MCF 10A (cell line): ENCODE measurements at regions of chr17 and their contacts with region 1.

Region 1: DNA sequence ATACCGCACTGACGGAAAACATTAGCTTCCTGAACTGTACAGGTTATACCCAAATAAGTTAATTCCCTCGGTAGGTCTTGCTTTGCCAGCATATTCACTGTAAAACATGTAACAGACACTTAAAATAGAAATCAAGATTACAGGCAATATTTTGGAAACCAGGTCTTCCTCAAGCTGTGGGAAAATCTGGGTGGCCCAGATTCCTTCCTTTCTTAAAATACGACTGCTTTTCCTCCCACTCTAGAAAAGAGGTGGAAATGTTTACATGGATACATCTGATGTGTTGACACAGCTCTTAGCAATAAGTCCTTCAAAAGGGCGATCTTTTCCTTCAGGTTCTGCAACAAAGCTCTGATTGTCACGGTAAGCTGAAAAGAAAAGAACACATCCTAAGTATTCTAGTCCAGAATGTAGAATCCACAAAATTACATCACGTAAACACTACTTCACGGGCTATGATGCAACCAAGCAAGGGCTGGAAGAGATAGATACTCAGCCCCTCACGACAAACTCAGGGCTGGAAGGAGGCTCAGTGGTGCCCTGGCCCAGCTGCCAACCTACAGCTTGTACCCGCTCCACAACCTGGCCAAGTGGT is 18.4 kb downstream of the STX8 start:
- DNase-seq: no peak
- H3K4me3 Mint-ChIP-seq: no peak overlapping the region
- H3K27ac Mint-ChIP-seq: no peak overlapping the region
- H3K4me1 Mint-ChIP-seq: no peaks in the 10 kb centered on the region
- H3K27me3 Mint-ChIP-seq: no peaks in the 10 kb centered on the region
- CTCF ChIP-seq: no peak

Region 2: GRCh38 chr17:8753976-8754440 is 803.2 kb before region 1 on chr17:
- CTCF ChIA-PET with region 1: no interaction called
- POLR2A ChIA-PET with region 1: no interaction called
- intact Hi-C with region 1: loop called (anchors 10 kb)
- DNase-seq: peak; percentile 36
- H3K4me3 Mint-ChIP-seq: no peak overlapping the region
- H3K27ac Mint-ChIP-seq: no peak overlapping the region
- H3K4me1 Mint-ChIP-seq: no peaks in the 10 kb centered on the region
- H3K27me3 Mint-ChIP-seq: peaks cover 60% of the 10 kb centered on the region
- CTCF ChIP-seq: peak; percentile 22

Region 3: GRCh38 chr17:9612006-9612405 is 54.7 kb after region 1 on chr17:
- CTCF ChIA-PET with region 1: no interaction called
- POLR2A ChIA-PET with region 1: no interaction called
- intact Hi-C with region 1: no loop called
- DNase-seq: no peak
- H3K4me3 Mint-ChIP-seq: no peak overlapping the region
- H3K27ac Mint-ChIP-seq: no peak overlapping the region
- H3K4me1 Mint-ChIP-seq: no peaks in the 10 kb centered on the region
- H3K27me3 Mint-ChIP-seq: no peaks in the 10 kb centered on the region
- CTCF ChIP-seq: no peak